HEK293 (cell line): ENCODE measurements at regions of chr20 and their contacts with region 1.

Region 1: DNA sequence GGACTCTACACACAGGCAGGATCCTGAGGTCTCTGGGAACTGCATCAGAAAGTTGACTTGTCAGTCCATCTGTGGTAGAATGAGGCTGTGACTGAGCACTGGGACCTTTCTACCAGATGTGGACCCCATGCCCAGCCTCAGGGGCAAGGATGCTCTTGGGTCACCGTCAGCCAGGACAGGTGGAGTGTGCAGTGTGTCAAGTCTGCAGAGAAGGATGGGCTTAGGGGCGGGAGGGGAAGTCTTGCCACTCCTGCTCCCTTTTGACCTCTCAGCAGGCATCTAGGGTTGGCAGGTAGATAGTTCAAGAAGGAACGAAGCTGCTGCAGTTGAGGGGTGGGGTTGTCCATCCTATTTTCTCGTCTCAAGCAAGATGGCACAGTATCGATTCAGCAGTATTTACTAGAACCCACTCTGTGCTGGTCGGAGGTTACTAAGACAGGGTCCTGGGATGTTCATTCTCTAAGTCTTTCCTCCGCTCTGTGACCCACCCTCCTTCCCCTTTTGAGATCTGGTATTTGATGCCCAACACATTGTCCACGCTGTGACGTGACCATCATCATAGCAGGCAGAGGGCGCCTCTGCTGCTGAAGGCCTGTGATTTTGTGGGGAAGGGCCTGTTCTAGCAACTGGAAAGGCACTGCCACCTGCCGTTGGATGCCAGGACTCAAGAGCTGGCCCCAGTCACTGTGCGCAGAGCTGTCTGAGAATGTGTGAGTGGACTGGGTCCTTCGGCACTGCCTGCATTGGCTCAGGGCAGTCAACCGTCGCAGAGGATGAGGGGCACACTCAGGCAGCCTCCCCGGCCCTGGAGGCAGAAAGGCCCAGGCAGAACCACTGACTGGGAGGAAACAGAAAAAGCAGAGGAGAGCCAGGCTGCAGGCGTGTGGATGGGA is 23.2 kb downstream of the RBCK1 start:
- H3K4me3 ChIP-seq: no peak overlapping the region
- H3K27ac ChIP-seq: peak overlapping the region; percentile 41; the same call in 1 of the 2 replicates
- H3K4me1 ChIP-seq: no peaks in the 10 kb centered on the region; the same call in 1 of the 2 replicates
- CTCF ChIP-seq: peak; percentile 98

Region 2: GRCh38 chr20:444862-445426 is 13.7 kb after region 1 on chr20:
- CTCF ChIA-PET with region 1: interaction called, 14 read pairs
- POLR2A ChIA-PET with region 1: no interaction called
- H3K4me3 ChIP-seq: no peak overlapping the region
- H3K27ac ChIP-seq: no peak overlapping the region
- H3K4me1 ChIP-seq: no peaks in the 10 kb centered on the region
- CTCF ChIP-seq: no peak

Region 3: DNA sequence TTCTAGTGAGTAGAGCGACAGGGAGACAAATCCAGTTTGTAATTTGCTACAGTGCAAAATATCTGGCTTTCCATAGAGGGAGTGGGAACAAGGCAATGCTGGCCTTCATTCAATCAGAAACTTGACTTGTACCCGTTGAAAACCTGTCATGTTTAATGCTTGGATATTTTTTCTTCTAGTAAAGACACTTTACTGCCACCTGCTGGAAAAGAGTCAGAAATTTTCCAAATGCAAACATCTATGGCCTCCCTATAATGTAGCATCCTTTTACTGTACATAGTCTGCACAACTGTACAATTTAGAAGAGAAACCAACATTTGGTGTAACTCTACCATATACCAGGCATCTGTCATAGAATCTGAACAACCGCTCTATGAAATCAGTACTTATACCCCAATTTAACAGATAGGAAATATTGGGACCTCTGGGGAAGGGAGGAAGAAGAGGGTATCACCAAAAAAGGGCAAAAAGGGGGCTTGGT is 47.7 kb after region 1 on chr20:
- CTCF ChIA-PET with region 1: interaction called, 11 read pairs
- POLR2A ChIA-PET with region 1: no interaction called
- H3K4me3 ChIP-seq: no peak overlapping the region
- H3K27ac ChIP-seq: no peak overlapping the region
- H3K4me1 ChIP-seq: no peaks in the 10 kb centered on the region
- CTCF ChIP-seq: no peak

Region 4: DNA sequence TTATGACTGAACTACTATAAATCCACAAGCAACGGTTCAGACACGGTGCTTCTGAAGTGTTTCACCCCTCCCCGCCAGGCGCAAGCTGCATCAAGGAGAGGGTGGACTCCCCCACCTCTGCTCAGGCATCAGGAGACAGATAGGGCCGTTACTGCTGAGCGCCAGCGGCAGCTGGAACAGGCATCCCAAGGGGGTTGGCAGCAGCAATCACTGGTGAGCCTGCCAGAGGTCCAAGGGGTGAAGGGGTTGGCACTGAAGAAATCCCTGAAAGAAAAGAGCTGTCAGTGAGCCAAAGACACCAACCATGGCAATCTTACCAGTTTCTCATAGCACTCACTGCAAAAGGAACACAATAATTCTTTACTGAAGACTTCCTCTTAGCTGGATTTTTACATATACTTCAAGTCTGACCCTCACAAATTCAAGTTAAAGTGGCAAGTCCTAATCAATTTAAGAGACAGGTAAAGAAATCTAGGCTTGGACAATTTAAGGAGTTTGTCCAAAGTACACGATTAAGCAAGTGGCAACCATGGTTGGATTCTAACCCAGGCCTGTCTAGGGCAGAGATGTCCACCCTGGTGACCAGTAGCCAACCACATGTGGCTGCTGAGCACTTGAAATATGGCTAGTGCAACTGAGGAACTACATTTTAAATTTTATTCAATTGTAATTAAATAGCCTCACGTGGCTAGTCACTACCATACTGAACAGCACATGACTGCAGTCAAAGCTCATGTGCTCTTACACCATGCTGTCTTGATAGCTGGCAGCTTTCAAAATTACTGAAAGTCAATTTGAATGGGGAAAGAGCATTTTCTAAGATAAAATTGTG is 52.8 kb after region 1 on chr20:
- CTCF ChIA-PET with region 1: interaction called, 12 read pairs
- POLR2A ChIA-PET with region 1: no interaction called
- H3K4me3 ChIP-seq: no peak overlapping the region
- H3K27ac ChIP-seq: no peak overlapping the region
- H3K4me1 ChIP-seq: no peaks in the 10 kb centered on the region
- CTCF ChIP-seq: no peak

Region 5: GRCh38 chr20:766931-767330 is 335.7 kb after region 1 on chr20:
- CTCF ChIA-PET with region 1: no interaction called
- POLR2A ChIA-PET with region 1: no interaction called
- H3K4me3 ChIP-seq: no peak overlapping the region
- H3K27ac ChIP-seq: no peak overlapping the region
- H3K4me1 ChIP-seq: no peaks in the 10 kb centered on the region
- CTCF ChIP-seq: no peak

Region 6: GRCh38 chr20:916125-916799 is 485.0 kb after region 1 on chr20 and contains the start of gene ANGPT4:
- CTCF ChIA-PET with region 1: no interaction called
- POLR2A ChIA-PET with region 1: no interaction called
- H3K4me3 ChIP-seq: no peak within 1 kb of the TSS
- H3K27ac ChIP-seq: no peak within 1 kb of the TSS
- H3K4me1 ChIP-seq: no peaks in the 10 kb centered on the region
- CTCF ChIP-seq: no peak